Panc1 (cell line): ENCODE measurements at regions of chr17 and their contacts with region 1.

Region 1: GRCh38 chr17:49434821-49435670 is 20.4 kb upstream of the PHB1 start:
- DNase-seq: no peak
- ATAC-seq: peak; percentile 88
- H3K4me3 ChIP-seq: no peak overlapping the region
- H3K27ac ChIP-seq: no peak overlapping the region
- H3K4me1 ChIP-seq: no peaks in the 10 kb centered on the region
- H3K27me3 ChIP-seq: peaks cover 12% of the 10 kb centered on the region
- CTCF ChIP-seq: peak; percentile 92

Region 2: DNA sequence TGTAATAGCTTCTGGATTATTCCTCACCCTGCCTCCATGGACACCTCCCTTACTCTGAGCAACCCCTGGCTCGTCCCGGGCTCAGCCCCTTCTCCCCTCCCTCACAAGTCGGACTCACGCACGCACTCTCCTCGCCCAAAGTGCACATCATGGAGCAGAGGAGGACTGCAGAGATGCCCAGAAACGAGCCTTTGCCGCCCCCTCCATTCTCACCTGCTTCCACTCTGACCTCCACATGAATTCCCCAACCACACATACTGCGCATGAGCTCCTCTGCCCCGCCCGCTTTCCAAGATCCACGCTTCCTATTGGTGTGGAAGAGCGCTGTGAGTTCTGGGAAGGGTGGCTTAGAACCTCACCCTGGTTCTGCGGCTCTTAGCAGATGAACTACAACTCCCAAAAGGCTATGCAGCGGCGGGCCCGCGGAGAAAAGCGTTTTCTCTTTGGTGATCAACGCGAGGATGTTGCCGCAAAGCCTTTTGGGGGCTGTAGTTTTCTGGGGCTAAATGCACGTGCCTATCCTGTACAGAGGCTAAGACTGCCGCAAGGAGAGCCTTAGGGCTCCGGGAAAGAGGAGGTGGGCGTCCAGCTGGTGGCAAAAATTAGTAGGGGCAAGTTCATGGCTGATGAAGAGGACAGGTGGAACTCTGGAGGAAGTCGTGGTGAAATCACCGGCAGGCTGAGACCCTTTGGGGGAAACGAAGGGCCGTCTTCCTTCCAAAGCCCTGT is 20.3 kb before region 1 on chr17 and contains the start of gene PHB1:
- CTCF ChIA-PET with region 1: no interaction called
- POLR2A ChIA-PET with region 1: no interaction called
- in situ Hi-C with region 1: no loop called
- intact Hi-C with region 1: no loop called
- DNase-seq: peak; percentile 92
- ATAC-seq: peak; percentile 100
- H3K4me3 ChIP-seq: peak within 1 kb of the TSS; percentile 60 to 99
- H3K27ac ChIP-seq: peak within 1 kb of the TSS; percentile 83
- H3K4me1 ChIP-seq: peaks cover 8% of the 10 kb centered on the region
- H3K27me3 ChIP-seq: no peaks in the 10 kb centered on the region
- CTCF ChIP-seq: no peak
- total RNA-seq, gene PHB1: 367 TPM

Region 3: DNA sequence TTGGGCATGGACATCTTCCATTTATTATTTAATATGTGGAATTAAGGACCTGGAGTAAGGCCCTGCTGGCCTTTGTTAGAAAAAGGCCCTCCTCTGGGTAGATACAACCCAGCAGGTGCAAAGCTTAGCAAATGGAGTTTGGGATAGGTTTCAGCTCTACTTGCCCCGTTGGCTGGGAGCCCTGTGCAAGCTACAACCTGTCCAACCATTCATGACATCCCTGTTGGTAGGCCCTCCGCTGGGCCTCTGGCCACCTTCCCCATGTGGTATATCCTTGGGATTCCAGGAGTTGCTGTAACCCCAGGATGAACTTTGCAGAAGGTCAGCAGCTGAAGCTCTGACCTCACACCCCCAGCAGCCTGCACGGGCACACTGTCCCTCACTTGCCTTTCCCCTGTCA is 66.5 kb after region 1 on chr17:
- CTCF ChIA-PET with region 1: no interaction called
- POLR2A ChIA-PET with region 1: no interaction called
- in situ Hi-C with region 1: loop called (anchors 5 kb)
- intact Hi-C with region 1: no loop called
- DNase-seq: no peak
- ATAC-seq: no peak
- H3K4me3 ChIP-seq: no peak overlapping the region
- H3K27ac ChIP-seq: no peak overlapping the region
- H3K4me1 ChIP-seq: peaks cover 8% of the 10 kb centered on the region
- H3K27me3 ChIP-seq: peaks cover 17% of the 10 kb centered on the region
- CTCF ChIP-seq: no peak